B cell (primary cell): ENCODE measurements at regions of chr1 and their contacts with region 1.

Region 1: GRCh38 chr1:205977402-205978014 is 25.7 kb downstream of the RAB7B start:
- DNase-seq: peak; percentile 83
- ATAC-seq: peak; percentile 84
- H3K4me3 ChIP-seq: no peak overlapping the region
- H3K4me3 Mint-ChIP-seq: no peak overlapping the region
- H3K27ac ChIP-seq: no peak overlapping the region
- H3K27ac Mint-ChIP-seq: no peak overlapping the region
- H3K4me1 ChIP-seq: no peaks in the 10 kb centered on the region
- H3K4me1 Mint-ChIP-seq: no peaks in the 10 kb centered on the region
- H3K27me3 ChIP-seq: no peaks in the 10 kb centered on the region
- H3K27me3 Mint-ChIP-seq: peaks cover 2% of the 10 kb centered on the region
- CTCF ChIP-seq: peak; percentile 96

Region 2: DNA sequence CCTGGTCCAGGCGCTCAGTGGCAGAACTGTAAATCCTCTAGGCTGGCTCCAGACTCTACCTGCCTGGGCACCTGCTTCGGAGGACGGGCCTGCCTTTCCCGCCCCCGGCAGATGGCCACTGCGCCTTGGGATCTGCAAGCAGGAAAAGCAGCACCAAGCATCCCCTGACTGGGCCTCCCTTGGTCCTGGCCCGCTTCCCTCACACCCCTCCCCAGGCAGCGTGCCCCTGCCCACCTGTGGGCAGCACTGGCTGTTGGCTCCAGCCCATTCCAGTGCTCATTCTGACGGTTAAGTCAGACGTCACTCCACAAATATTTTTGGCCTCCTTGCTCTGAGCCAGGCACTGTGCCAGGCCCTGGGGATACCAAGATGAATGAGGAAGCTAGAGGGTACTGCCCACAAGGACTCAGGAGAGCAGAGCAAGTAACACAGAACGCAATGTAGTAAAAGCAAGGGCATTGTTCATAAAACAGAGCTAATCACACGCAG is 499.7 kb before region 1 on chr1:
- CTCF ChIA-PET with region 1: no interaction called
- POLR2A ChIA-PET with region 1: no interaction called
- intact Hi-C with region 1: no loop called
- DNase-seq: no peak
- ATAC-seq: no peak
- H3K4me3 ChIP-seq: no peak overlapping the region
- H3K4me3 Mint-ChIP-seq: no peak overlapping the region
- H3K27ac ChIP-seq: no peak overlapping the region
- H3K27ac Mint-ChIP-seq: no peak overlapping the region
- H3K4me1 ChIP-seq: peaks cover 26 to 29% of the 10 kb centered on the region in 2 donors
- H3K4me1 Mint-ChIP-seq: peaks cover 27% of the 10 kb centered on the region
- H3K27me3 ChIP-seq: peaks cover 0 to 35% (median 10%) of the 10 kb centered on the region in 4 experiments
- H3K27me3 Mint-ChIP-seq: peaks cover 24% of the 10 kb centered on the region
- CTCF ChIP-seq: no peak

Region 3: GRCh38 chr1:205668951-205669340 is 308.6 kb before region 1 on chr1:
- CTCF ChIA-PET with region 1: interaction called, 12 read pairs
- POLR2A ChIA-PET with region 1: no interaction called
- intact Hi-C with region 1: no loop called
- DNase-seq: peak; percentile 88
- ATAC-seq: peak; percentile 68
- H3K4me3 ChIP-seq: peak overlapping the region in 2 of 5 experiments; percentile 29 to 47
- H3K4me3 Mint-ChIP-seq: peak overlapping the region; percentile 74
- H3K27ac ChIP-seq: peak overlapping the region; percentile 89 to 93
- H3K27ac Mint-ChIP-seq: peak overlapping the region; percentile 88
- H3K4me1 ChIP-seq: peaks cover 86 to 92% of the 10 kb centered on the region in 2 donors
- H3K4me1 Mint-ChIP-seq: peaks cover 78% of the 10 kb centered on the region
- H3K27me3 ChIP-seq: no peaks in the 10 kb centered on the region
- H3K27me3 Mint-ChIP-seq: no peaks in the 10 kb centered on the region
- CTCF ChIP-seq: peak; percentile 26

Region 4: GRCh38 chr1:205805082-205805712 is 172.3 kb before region 1 on chr1:
- CTCF ChIA-PET with region 1: interaction called, 17 read pairs
- POLR2A ChIA-PET with region 1: no interaction called
- intact Hi-C with region 1: no loop called
- DNase-seq: no peak
- ATAC-seq: no peak
- H3K4me3 ChIP-seq: no peak overlapping the region
- H3K4me3 Mint-ChIP-seq: no peak overlapping the region
- H3K27ac ChIP-seq: peak overlapping the region in 1 of 2 donors; percentile 1
- H3K27ac Mint-ChIP-seq: no peak overlapping the region
- H3K4me1 ChIP-seq: peaks cover 34 to 37% of the 10 kb centered on the region in 2 donors
- H3K4me1 Mint-ChIP-seq: peaks cover 54% of the 10 kb centered on the region
- H3K27me3 ChIP-seq: no peaks in the 10 kb centered on the region
- H3K27me3 Mint-ChIP-seq: no peaks in the 10 kb centered on the region
- CTCF ChIP-seq: no peak

Region 5: GRCh38 chr1:205963352-205964155 is 14.0 kb before region 1 on chr1:
- CTCF ChIA-PET with region 1: interaction called, 28 read pairs
- POLR2A ChIA-PET with region 1: no interaction called
- intact Hi-C with region 1: no loop called
- DNase-seq: no peak
- ATAC-seq: no peak
- H3K4me3 ChIP-seq: no peak overlapping the region
- H3K4me3 Mint-ChIP-seq: no peak overlapping the region
- H3K27ac ChIP-seq: no peak overlapping the region
- H3K27ac Mint-ChIP-seq: no peak overlapping the region
- H3K4me1 ChIP-seq: no peaks in the 10 kb centered on the region
- H3K4me1 Mint-ChIP-seq: no peaks in the 10 kb centered on the region
- H3K27me3 ChIP-seq: no peaks in the 10 kb centered on the region
- H3K27me3 Mint-ChIP-seq: peaks cover 17% of the 10 kb centered on the region
- CTCF ChIP-seq: no peak

Region 6: DNA sequence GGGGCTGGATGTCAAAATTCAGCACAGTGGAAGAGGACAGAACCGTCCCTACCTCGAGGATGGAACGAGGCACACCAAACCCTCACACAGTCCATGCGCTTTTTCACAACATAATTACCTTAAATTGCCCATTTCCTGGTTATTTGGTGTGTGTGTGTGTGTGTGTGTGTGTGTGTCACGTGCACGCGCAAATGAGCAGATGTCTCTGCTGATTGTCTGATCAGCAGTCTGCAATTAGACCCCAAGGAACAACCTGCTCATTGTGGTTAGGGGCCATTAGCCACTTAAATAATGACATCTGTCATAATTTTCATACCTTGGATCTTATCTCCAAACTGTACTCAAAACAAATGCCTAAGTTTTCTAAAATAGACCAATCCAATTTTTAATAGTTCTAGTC is 116.5 kb after region 1 on chr1:
- CTCF ChIA-PET with region 1: interaction called, 11 read pairs
- POLR2A ChIA-PET with region 1: no interaction called
- intact Hi-C with region 1: no loop called
- DNase-seq: no peak
- ATAC-seq: no peak
- H3K4me3 ChIP-seq: no peak overlapping the region
- H3K4me3 Mint-ChIP-seq: no peak overlapping the region
- H3K27ac ChIP-seq: no peak overlapping the region
- H3K27ac Mint-ChIP-seq: no peak overlapping the region
- H3K4me1 ChIP-seq: peaks cover 0 to 5% of the 10 kb centered on the region in 2 donors
- H3K4me1 Mint-ChIP-seq: peaks cover 4% of the 10 kb centered on the region
- H3K27me3 ChIP-seq: no peaks in the 10 kb centered on the region
- H3K27me3 Mint-ChIP-seq: no peaks in the 10 kb centered on the region
- CTCF ChIP-seq: no peak